ENCODE measurements at regions of chr1 and their contacts with region 1.

Region 1: GRCh38 chr1:180040034-180040433 is 85.4 kb downstream of the CEP350 start:
- DNase-seq: peak; percentile 37
- ATAC-seq: no peak
- H3K4me3 ChIP-seq: no peak overlapping the region
- H3K27ac ChIP-seq: 0 out of 2 replicates have a peak overlapping the region, but pooled peaks have one; percentile 22
- H3K4me1 ChIP-seq: peaks cover 7% of the 10 kb centered on the region
- H3K27me3 ChIP-seq: no peaks in the 10 kb centered on the region
- CTCF ChIP-seq: no peak
- POLR2A ChIP-seq: no peak
- RAD21 ChIP-seq: no peak

Region 2: GRCh38 chr1:179425186-179425585 is 614.8 kb before region 1 on chr1:
- CTCF ChIA-PET with region 1: no interaction called
- POLR2A ChIA-PET with region 1: no interaction called
- dilution Hi-C with region 1: no loop called
- in situ Hi-C with region 1: no loop called
- intact Hi-C with region 1: no loop called
- DNase-seq: no peak
- ATAC-seq: no peak
- H3K4me3 ChIP-seq: no peak overlapping the region
- H3K27ac ChIP-seq: no peak overlapping the region
- H3K4me1 ChIP-seq: no peaks in the 10 kb centered on the region
- H3K27me3 ChIP-seq: no peaks in the 10 kb centered on the region
- CTCF ChIP-seq: no peak
- POLR2A ChIP-seq: no peak
- RAD21 ChIP-seq: no peak

Region 3: GRCh38 chr1:180027949-180028445 is 12.0 kb before region 1 on chr1:
- CTCF ChIA-PET with region 1: interaction called, 5 read pairs
- POLR2A ChIA-PET with region 1: no interaction called
- dilution Hi-C with region 1: no loop called
- in situ Hi-C with region 1: no loop called
- intact Hi-C with region 1: loop called (anchors 2 kb)
- DNase-seq: peak; percentile 74
- ATAC-seq: peak; percentile 87
- H3K4me3 ChIP-seq: no peak overlapping the region
- H3K27ac ChIP-seq: peak overlapping the region; percentile 81; the same call in 1 of the 2 replicates
- H3K4me1 ChIP-seq: peaks cover 5% of the 10 kb centered on the region
- H3K27me3 ChIP-seq: no peaks in the 10 kb centered on the region
- CTCF ChIP-seq: no peak
- POLR2A ChIP-seq: no peak
- RAD21 ChIP-seq: no peak